Activated naive CD4-positive, alpha-beta T cell treated with anti-CD3 and anti-CD28 coated beads for 36 hours (primary cell): ENCODE measurements at regions of chr7 and their contacts with region 1.

Region 1: DNA sequence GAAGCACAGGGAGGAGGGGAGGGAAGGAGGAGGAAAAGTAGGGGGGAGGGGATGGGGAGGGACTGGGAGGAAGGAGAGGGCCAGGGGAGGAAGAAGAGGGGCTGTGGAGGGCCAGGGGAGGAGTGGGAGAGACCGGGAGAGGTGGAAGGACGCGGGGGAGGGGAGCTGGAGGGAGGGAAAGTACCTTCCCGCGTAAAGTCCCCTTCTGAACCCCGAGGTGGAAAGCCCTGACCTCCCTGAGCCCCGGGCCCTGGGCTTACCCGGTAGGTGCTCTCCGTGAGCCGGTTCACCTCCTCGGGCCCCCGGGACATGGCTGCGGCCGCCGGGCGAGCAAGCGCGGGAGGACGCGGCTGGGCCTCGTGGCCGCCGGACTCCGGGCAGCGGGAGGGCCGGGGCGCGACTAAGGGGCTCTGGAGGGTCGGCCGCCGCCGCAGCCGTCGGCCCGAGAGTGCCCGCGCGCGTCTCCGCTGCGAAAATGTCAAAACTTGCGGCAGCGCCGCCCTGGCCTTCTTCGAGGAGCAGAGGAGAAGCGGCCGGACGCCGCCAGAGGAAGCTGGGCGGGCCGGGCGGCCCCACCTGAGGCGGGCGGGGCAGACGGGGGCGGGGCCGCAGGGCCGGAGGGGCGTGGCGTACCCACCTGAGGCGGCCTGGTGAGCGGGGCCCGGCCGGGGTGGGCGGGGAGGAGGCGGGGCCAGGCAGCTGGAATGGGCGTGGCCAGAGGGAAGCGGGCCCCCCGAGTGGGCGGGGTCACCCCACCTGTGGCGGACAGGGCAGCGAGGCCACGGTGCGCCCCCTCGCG is at the start of gene BAIAP2L1:
- DNase-seq: peak; percentile 94
- H3K4me3 Mint-ChIP-seq: peak within 1 kb of the TSS; percentile 50
- H3K27ac Mint-ChIP-seq: no peak within 1 kb of the TSS
- H3K4me1 Mint-ChIP-seq: peaks cover 8% of the 10 kb centered on the region
- H3K27me3 Mint-ChIP-seq: peaks cover 16% of the 10 kb centered on the region
- total RNA-seq, gene BAIAP2L1: 5.6 to 6.1 TPM

Region 2: GRCh38 chr7:98021588-98022351 is 379.0 kb before region 1 on chr7:
- CTCF ChIA-PET with region 1: interaction called, 3 read pairs
- intact Hi-C with region 1: loop called (anchors 1 kb)
- DNase-seq: peak; percentile 89
- H3K4me3 Mint-ChIP-seq: no peak overlapping the region
- H3K27ac Mint-ChIP-seq: no peak overlapping the region
- H3K4me1 Mint-ChIP-seq: peaks cover 2% of the 10 kb centered on the region
- H3K27me3 Mint-ChIP-seq: peaks cover 3% of the 10 kb centered on the region

Region 3: GRCh38 chr7:98202367-98203195 is 198.2 kb before region 1 on chr7:
- CTCF ChIA-PET with region 1: no interaction called
- intact Hi-C with region 1: loop called (anchors 2 kb)
- DNase-seq: peak; percentile 81
- H3K4me3 Mint-ChIP-seq: peak overlapping the region; percentile 61
- H3K27ac Mint-ChIP-seq: peak overlapping the region; percentile 71
- H3K4me1 Mint-ChIP-seq: peaks cover 60% of the 10 kb centered on the region
- H3K27me3 Mint-ChIP-seq: no peaks in the 10 kb centered on the region

Region 4: DNA sequence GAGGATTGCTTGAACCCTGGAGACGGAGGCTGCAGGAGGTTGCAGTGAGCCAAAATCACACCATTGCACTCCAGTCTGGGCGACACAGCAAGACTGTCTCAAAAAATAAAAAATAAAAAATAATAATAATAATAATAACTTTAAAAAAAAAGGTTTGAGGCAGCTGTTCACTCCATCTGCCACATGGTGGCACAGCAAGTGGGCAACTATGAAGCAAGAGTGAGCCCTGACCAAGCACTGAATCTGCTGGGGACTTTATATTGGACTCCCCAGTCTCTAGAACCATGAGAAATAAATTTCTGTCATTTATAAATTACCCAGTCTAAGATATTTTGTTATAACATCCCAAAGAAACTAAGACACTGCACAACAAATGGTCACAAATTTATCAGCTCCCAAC is 133.9 kb before region 1 on chr7:
- CTCF ChIA-PET with region 1: interaction called, 3 read pairs
- intact Hi-C with region 1: loop called (anchors 1 kb)
- DNase-seq: no peak
- H3K4me3 Mint-ChIP-seq: no peak overlapping the region
- H3K27ac Mint-ChIP-seq: no peak overlapping the region
- H3K4me1 Mint-ChIP-seq: peaks cover 4% of the 10 kb centered on the region
- H3K27me3 Mint-ChIP-seq: no peaks in the 10 kb centered on the region

Region 5: DNA sequence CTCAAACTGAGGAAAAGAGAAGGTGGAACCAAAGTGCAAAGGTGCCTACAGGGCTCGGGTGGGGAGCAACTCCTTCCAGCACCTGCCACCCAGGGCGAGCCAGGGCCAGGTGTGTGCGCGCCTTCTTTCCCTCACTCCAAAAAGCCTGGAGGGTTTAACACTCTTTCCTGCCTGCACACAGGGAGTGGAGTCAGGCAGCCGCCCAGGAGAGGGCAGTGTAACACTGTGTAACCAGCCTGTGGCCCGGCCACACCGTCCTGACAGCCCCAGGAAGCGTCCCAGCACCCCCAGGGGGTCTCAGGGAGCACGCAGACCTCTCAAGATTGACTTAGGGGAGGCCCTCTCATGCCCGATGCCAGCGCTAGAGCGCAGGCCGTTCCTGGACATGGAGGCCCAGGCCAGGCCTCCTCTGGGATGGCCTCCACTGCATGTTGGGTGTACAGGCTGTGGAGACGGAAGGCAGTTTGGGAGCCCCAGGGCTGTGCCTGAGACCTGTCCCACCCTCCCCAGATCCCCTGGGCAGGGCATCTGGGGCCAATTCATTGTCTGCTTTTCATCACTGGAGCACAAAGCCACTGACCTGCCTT is 105.9 kb before region 1 on chr7:
- CTCF ChIA-PET with region 1: interaction called, 4 read pairs
- intact Hi-C with region 1: loop called (anchors 1 kb)
- DNase-seq: peak; percentile 55
- H3K4me3 Mint-ChIP-seq: no peak overlapping the region
- H3K27ac Mint-ChIP-seq: no peak overlapping the region
- H3K4me1 Mint-ChIP-seq: no peaks in the 10 kb centered on the region
- H3K27me3 Mint-ChIP-seq: no peaks in the 10 kb centered on the region

Region 6: GRCh38 chr7:98878365-98879165 is 477.8 kb after region 1 on chr7 and contains the start of gene TRRAP:
- CTCF ChIA-PET with region 1: interaction called, 5 read pairs
- intact Hi-C with region 1: loop called (anchors 1 kb)
- DNase-seq: peak; percentile 78
- H3K4me3 Mint-ChIP-seq: peak within 1 kb of the TSS; percentile 88
- H3K27ac Mint-ChIP-seq: peak within 1 kb of the TSS; percentile 94
- H3K4me1 Mint-ChIP-seq: peaks cover 30% of the 10 kb centered on the region
- H3K27me3 Mint-ChIP-seq: no peaks in the 10 kb centered on the region
- total RNA-seq, gene TRRAP: 33.5 to 37.4 TPM